ENCODE measurements at regions of chr6 and their contacts with region 1.

Region 1: DNA sequence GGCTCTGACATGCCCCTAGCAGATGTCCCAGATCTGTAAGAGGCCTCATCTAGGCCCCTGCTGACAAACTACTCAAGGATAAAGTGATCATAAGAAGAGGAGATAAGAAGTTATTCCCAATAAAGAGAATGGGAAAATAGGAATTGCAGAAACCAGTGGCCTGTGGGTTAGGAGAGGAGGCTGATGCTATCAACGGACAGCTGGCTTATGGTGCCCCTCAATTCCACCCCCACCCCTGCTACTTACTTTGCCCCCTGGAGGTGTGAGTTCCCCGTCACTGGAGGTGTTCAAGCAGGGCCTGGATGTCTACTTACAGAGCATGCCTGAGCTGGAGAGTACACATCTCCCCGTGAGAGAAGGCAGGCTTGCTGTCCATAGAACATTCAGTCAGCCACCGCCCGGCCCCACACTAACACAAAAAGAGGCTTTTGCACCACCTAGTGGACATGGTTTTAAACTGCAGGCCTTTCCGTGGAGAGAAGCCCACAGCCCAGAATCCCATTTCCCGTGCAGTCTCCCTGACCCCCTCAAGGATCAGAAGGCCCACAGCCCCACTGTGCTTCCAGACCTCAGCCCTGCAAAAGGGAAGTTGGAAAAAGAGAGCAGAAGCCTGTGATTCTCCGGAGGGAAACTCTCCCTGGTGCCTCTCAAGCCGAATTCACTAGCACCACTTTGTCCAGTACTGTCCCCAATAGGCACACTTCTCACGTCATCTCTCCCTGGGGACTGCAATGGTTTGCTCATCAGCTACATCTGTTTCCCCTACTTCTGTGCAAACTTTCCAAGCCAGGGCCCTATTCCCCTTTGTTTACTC is 23.8 kb upstream of the BNIP5 start:
- DNase-seq: peak; percentile 66 to 88 (median 76)
- ATAC-seq: peak; percentile 89
- H3K4me3 ChIP-seq: no peak overlapping the region
- H3K27ac ChIP-seq: no peak overlapping the region
- H3K4me1 ChIP-seq: peaks cover 6 to 52% of the 10 kb centered on the region in 2 donors
- H3K27me3 ChIP-seq: no peaks in the 10 kb centered on the region
- CTCF ChIP-seq: peak; percentile 74 to 88

Region 2: GRCh38 chr6:35824552-35825192 is 535.8 kb before region 1 on chr6:
- intact Hi-C with region 1: no loop called
- DNase-seq: no peak
- ATAC-seq: no peak
- H3K4me3 ChIP-seq: no peak overlapping the region
- H3K27ac ChIP-seq: no peak overlapping the region
- H3K4me1 ChIP-seq: no peaks in the 10 kb centered on the region
- H3K27me3 ChIP-seq: no peaks in the 10 kb centered on the region
- CTCF ChIP-seq: no peak

Region 3: DNA sequence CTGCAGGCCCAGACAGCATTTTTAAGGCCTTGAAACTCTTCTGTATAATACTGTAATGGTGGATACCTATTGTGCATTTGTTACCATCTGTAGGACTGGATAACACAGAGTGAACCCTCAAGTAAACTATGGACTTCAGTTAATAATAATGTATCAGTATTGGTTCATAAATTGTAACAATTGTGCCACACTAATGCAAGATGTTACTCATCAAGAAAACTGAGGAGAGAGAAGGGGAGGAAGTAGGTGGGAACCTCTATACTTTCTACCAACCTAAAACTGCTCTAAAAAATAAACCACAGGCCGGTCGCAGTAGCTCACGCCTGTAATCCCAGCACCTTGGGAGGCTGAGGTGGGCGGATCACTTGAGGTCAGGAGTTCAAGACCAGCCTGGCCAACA is 219.4 kb before region 1 on chr6:
- intact Hi-C with region 1: no loop called
- DNase-seq: no peak
- ATAC-seq: no peak
- H3K4me3 ChIP-seq: no peak overlapping the region
- H3K27ac ChIP-seq: no peak overlapping the region
- H3K4me1 ChIP-seq: peaks cover 0 to 21% of the 10 kb centered on the region in 2 donors
- H3K27me3 ChIP-seq: no peaks in the 10 kb centered on the region
- CTCF ChIP-seq: no peak

Region 4: DNA sequence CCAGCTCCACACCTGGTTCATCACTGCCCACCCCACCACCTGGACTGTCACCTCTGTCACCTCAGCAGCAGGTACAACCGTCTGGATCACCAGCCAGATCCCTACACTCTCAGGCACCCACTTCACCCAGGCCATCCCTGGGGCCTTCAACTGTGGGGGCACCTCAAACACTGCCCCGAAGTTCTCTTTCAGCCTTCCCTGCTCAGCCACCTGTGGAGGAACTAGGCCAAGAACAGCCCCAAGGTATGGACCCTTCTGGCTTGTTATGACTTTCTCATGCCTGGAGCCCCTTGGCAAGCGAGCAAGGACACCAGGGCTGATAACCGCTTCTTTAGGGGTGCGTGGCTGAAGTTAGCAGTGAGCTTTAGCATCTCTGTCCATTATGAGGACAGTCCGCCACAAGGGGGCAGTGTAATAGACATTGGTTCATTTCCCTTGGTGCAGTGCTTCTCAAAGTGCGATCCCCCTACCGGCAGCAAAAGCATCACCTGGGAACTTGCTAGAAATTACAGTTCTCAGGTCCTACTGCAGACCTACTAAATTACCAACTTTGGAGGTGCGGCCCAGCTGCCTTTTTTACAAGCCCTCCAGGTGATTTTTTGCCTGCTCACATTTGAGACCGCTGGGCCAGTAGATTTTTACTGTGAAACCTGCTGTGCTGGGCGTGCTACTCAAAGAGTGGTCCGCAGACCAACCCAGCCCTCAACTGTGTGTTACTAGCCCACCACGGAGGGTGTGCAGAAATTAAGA is 58.0 kb before region 1 on chr6:
- intact Hi-C with region 1: loop called in 1 of 2 experiments (anchors 2 kb)
- DNase-seq: peak in 3 of 4 donors; percentile 81 to 88 (median 83)
- ATAC-seq: peak; percentile 97
- H3K4me3 ChIP-seq: no peak overlapping the region
- H3K27ac ChIP-seq: no peak overlapping the region
- H3K4me1 ChIP-seq: peaks cover 0 to 21% of the 10 kb centered on the region in 2 donors
- H3K27me3 ChIP-seq: peaks cover 0 to 10% of the 10 kb centered on the region in 2 donors
- CTCF ChIP-seq: peak; percentile 92

Measured in left lung (tissue), 14 donors.